ENCODE measurements at regions of chr9 and their contacts with region 1.

Region 1: DNA sequence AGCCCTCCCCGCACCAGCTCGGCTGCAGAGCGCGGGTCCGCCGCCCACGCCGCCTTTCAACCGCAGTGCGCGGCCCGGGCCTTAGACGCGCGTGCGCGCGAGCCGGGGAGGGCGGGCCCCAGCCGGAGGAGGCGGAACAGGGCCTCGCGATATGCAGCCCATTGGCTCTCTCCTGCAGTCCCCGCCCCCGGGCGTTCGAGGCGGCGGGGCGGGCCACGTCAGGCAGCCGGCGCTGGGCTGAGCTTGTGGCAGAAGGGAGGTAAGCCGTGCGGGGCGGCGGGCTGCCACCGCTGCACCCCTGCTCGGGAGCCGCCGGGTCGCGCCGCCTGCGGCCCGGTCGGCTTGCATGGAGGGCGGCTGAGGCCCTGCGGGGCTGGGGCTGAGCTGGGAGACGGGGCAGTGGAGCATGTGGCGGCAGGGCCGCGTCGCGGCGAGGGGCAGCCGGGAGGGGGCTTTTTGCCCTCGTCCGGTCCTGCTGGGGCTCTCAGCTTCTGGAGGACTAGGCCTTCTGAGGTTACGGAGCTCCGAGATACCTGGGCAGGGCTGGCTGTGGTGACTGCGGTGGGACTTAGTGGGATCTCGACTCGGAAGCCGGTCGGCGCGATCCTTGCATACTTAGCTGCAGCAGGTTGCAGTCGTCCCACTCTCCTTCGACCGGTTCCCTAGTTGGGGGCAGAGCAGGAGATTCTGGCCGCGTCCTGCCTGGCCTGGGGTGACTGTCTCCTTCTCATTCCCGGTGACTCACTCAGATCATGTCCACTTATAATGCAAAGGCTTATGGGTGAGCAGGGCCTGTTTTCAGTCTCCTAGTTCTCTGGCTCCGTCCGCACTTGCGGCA is at the start of gene FOCAD:
- DNase-seq: peak; percentile 88 to 97 (median 94)
- ATAC-seq: peak; percentile 98
- H3K4me3 ChIP-seq: peak within 1 kb of the TSS; percentile 63 to 74
- H3K4me3 Mint-ChIP-seq: peak within 1 kb of the TSS; percentile 87
- H3K27ac ChIP-seq: peak within 1 kb of the TSS; percentile 57 to 64
- H3K27ac Mint-ChIP-seq: peak within 1 kb of the TSS; percentile 84
- H3K4me1 ChIP-seq: peaks cover 8% of the 10 kb centered on the region
- H3K4me1 Mint-ChIP-seq: peaks cover 20% of the 10 kb centered on the region
- H3K27me3 ChIP-seq: no peaks in the 10 kb centered on the region
- H3K27me3 Mint-ChIP-seq: no peaks in the 10 kb centered on the region
- CTCF ChIP-seq: no peak
- total RNA-seq, gene FOCAD: 7.1 to 9.8 TPM

Region 2: GRCh38 chr9:20447291-20447690 is 237.0 kb before region 1 on chr9:
- CTCF ChIA-PET with region 1: no interaction called
- POLR2A ChIA-PET with region 1: no interaction called
- intact Hi-C with region 1: no loop called
- DNase-seq: no peak
- ATAC-seq: no peak
- H3K4me3 ChIP-seq: no peak overlapping the region
- H3K4me3 Mint-ChIP-seq: no peak overlapping the region
- H3K27ac ChIP-seq: no peak overlapping the region
- H3K27ac Mint-ChIP-seq: no peak overlapping the region
- H3K4me1 ChIP-seq: peaks cover under 1% of the 10 kb centered on the region
- H3K4me1 Mint-ChIP-seq: peaks cover 32% of the 10 kb centered on the region
- H3K27me3 ChIP-seq: no peaks in the 10 kb centered on the region
- H3K27me3 Mint-ChIP-seq: no peaks in the 10 kb centered on the region
- CTCF ChIP-seq: no peak

Region 3: GRCh38 chr9:20552874-20553575 is 131.2 kb before region 1 on chr9:
- CTCF ChIA-PET with region 1: no interaction called
- POLR2A ChIA-PET with region 1: no interaction called
- intact Hi-C with region 1: loop called in 1 of 2 experiments (anchors 5 kb)
- DNase-seq: peak in 2 of 9 experiments; percentile 7 to 29
- ATAC-seq: peak; percentile 17
- H3K4me3 ChIP-seq: no peak overlapping the region
- H3K4me3 Mint-ChIP-seq: peak overlapping the region; percentile 10
- H3K27ac ChIP-seq: no peak overlapping the region
- H3K27ac Mint-ChIP-seq: peak overlapping the region; percentile 23
- H3K4me1 ChIP-seq: peaks cover 37% of the 10 kb centered on the region
- H3K4me1 Mint-ChIP-seq: peaks cover 81% of the 10 kb centered on the region
- H3K27me3 ChIP-seq: no peaks in the 10 kb centered on the region
- H3K27me3 Mint-ChIP-seq: no peaks in the 10 kb centered on the region
- CTCF ChIP-seq: peak; percentile 27

Region 4: DNA sequence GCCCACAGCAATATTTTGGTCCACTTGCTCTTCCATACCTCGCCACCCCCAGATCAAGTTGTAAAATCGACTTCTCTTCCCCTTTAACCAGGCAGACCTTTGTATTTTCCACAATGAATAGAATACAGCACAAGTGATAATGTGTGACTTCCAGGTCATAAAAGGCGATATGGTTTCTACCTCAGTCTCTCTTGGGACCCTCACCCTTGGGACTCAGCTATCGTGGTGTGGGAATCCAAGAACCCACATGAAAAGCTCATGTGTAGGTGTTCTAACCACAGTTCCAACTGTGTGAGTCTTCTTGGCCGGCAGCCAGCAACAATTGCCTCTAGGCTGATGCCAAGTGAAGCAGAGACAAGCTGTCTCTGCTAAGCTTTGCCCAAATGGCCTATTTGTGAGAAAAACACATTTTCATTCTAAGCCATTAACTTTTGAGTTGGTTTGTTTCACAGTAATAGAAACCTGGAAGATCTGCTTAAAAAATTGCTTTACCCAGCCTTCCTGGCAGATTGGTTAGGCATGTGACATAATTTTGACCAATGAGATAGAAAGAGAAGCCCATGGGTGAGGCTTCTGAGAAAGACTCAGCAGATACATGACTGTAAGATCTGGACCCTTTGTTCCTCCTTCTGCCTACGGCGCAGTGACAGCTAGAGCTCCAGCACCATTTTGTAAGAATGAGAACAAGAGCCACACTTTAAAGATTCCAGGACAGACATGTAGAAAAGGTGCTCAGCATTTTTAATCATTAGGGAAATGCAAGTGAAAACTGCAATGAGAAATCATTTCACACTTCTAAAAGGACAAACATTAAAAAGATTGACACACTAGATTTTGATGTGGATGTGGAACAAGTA is 43.7 kb before region 1 on chr9:
- CTCF ChIA-PET with region 1: interaction called, 3 read pairs
- POLR2A ChIA-PET with region 1: no interaction called
- intact Hi-C with region 1: loop called in 1 of 2 experiments (anchors 5 kb)
- DNase-seq: peak; percentile 46 to 87 (median 82)
- ATAC-seq: peak; percentile 85
- H3K4me3 ChIP-seq: peak overlapping the region in 1 of 2 experiments; percentile 10
- H3K4me3 Mint-ChIP-seq: peak overlapping the region; percentile 51
- H3K27ac ChIP-seq: no peak overlapping the region
- H3K27ac Mint-ChIP-seq: peak overlapping the region; percentile 69
- H3K4me1 ChIP-seq: peaks cover 19% of the 10 kb centered on the region
- H3K4me1 Mint-ChIP-seq: peaks cover 18% of the 10 kb centered on the region
- H3K27me3 ChIP-seq: no peaks in the 10 kb centered on the region
- H3K27me3 Mint-ChIP-seq: no peaks in the 10 kb centered on the region
- CTCF ChIP-seq: no peak

Region 5: GRCh38 chr9:20658677-20659473 is 25.4 kb before region 1 on chr9:
- CTCF ChIA-PET with region 1: no interaction called
- POLR2A ChIA-PET with region 1: interaction called, 8 read pairs
- intact Hi-C with region 1: loop called (anchors 2 kb)
- DNase-seq: peak in 2 of 9 experiments; percentile 20 to 30
- ATAC-seq: peak; percentile 48
- H3K4me3 ChIP-seq: peak overlapping the region; percentile 39 to 50
- H3K4me3 Mint-ChIP-seq: no peak overlapping the region
- H3K27ac ChIP-seq: peak overlapping the region in 1 of 2 experiments; percentile 20
- H3K27ac Mint-ChIP-seq: peak overlapping the region; percentile 85
- H3K4me1 ChIP-seq: peaks cover 22% of the 10 kb centered on the region
- H3K4me1 Mint-ChIP-seq: peaks cover 11% of the 10 kb centered on the region
- H3K27me3 ChIP-seq: no peaks in the 10 kb centered on the region
- H3K27me3 Mint-ChIP-seq: no peaks in the 10 kb centered on the region
- CTCF ChIP-seq: no peak

Region 6: GRCh38 chr9:21031091-21031807 is 347.0 kb after region 1 on chr9 and contains the start of gene HACD4:
- CTCF ChIA-PET with region 1: no interaction called
- POLR2A ChIA-PET with region 1: no interaction called
- intact Hi-C with region 1: loop called (anchors 5 to 10 kb)
- DNase-seq: peak; percentile 40 to 83 (median 68)
- ATAC-seq: peak; percentile 82
- H3K4me3 ChIP-seq: peak within 1 kb of the TSS; percentile 75 to 94
- H3K4me3 Mint-ChIP-seq: peak within 1 kb of the TSS; percentile 84
- H3K27ac ChIP-seq: peak within 1 kb of the TSS; percentile 79 to 85
- H3K27ac Mint-ChIP-seq: peak within 1 kb of the TSS; percentile 88
- H3K4me1 ChIP-seq: peaks cover 41% of the 10 kb centered on the region
- H3K4me1 Mint-ChIP-seq: peaks cover 24% of the 10 kb centered on the region
- H3K27me3 ChIP-seq: no peaks in the 10 kb centered on the region
- H3K27me3 Mint-ChIP-seq: no peaks in the 10 kb centered on the region
- CTCF ChIP-seq: no peak
- total RNA-seq, gene HACD4: 5.9 to 6.3 TPM

Measured in CD8-positive, alpha-beta T cell (primary cell).